GM12878 (cell line): ENCODE measurements at regions of chr12 and their contacts with region 1.

Region 1: DNA sequence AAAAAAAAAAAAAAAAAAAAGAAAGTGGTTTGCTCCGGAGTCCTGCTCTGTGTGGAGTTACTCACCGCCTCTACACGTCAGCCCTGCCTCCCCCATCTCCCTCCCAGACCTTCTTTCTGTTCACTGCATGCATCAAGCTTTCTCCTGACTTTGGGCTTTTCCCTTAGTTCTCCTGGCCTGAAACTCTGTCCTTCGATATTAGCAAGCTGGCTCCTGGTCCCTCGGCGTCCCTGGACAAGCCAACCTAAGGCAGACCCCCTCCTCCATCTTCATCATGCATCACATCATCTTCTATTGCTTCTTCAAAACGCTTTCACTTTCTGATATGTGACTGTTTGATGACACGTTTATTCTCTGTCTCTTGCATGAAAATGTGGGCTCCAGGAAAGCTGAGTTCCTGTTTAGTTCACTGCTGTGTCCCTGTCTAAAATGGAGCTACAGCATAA is 40.6 kb downstream of the SLC15A4 start:
- DNase-seq: no peak
- ATAC-seq: peak; percentile 83
- H3K4me3 ChIP-seq: no peak overlapping the region; the same call in 1 of the 2 replicates
- H3K27ac ChIP-seq: peak overlapping the region; percentile 47; the same call in 1 of the 2 replicates
- H3K4me1 ChIP-seq: no peaks in the 10 kb centered on the region; the same call in none of the 2 replicates
- H3K27me3 ChIP-seq: no peaks in the 10 kb centered on the region
- CTCF ChIP-seq: no peak
- EP300 ChIP-seq: no peak
- POLR2A ChIP-seq: no peak
- RAD21 ChIP-seq: no peak

Region 2: DNA sequence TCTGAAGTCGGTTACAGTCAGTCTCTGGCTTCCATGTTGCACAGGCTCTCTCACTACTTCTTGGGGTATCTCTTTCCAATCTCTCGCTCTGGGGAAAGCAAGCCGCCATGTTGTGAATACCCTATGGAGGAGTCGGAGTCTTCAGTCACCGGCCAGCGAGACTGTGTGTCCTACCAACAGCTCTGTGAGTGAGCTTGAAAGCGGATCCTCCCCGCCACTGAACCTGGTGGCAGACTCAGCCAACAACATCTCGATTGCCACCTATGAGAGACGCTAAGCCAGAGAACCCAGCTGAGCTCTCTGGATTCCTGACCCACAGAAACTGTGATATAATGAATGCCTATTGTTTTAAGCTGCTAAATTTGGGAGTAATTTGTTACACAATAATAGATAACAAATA is 10.9 kb before region 1 on chr12:
- CTCF ChIA-PET with region 1: interaction called, 26 read pairs
- POLR2A ChIA-PET with region 1: interaction called, 3 read pairs
- RAD21 ChIA-PET with region 1: interaction called, 8 read pairs
- SMC1A ChIA-PET with region 1: interaction called, 8 read pairs
- in situ Hi-C with region 1: no loop called
- intact Hi-C with region 1: no loop called
- DNase-seq: no peak
- ATAC-seq: no peak
- H3K4me3 ChIP-seq: no peak overlapping the region
- H3K27ac ChIP-seq: no peak overlapping the region
- H3K4me1 ChIP-seq: no peaks in the 10 kb centered on the region
- H3K27me3 ChIP-seq: no peaks in the 10 kb centered on the region; a peak in 2 of 4 replicates
- CTCF ChIP-seq: no peak
- EP300 ChIP-seq: no peak
- POLR2A ChIP-seq: no peak
- RAD21 ChIP-seq: no peak

Region 3: DNA sequence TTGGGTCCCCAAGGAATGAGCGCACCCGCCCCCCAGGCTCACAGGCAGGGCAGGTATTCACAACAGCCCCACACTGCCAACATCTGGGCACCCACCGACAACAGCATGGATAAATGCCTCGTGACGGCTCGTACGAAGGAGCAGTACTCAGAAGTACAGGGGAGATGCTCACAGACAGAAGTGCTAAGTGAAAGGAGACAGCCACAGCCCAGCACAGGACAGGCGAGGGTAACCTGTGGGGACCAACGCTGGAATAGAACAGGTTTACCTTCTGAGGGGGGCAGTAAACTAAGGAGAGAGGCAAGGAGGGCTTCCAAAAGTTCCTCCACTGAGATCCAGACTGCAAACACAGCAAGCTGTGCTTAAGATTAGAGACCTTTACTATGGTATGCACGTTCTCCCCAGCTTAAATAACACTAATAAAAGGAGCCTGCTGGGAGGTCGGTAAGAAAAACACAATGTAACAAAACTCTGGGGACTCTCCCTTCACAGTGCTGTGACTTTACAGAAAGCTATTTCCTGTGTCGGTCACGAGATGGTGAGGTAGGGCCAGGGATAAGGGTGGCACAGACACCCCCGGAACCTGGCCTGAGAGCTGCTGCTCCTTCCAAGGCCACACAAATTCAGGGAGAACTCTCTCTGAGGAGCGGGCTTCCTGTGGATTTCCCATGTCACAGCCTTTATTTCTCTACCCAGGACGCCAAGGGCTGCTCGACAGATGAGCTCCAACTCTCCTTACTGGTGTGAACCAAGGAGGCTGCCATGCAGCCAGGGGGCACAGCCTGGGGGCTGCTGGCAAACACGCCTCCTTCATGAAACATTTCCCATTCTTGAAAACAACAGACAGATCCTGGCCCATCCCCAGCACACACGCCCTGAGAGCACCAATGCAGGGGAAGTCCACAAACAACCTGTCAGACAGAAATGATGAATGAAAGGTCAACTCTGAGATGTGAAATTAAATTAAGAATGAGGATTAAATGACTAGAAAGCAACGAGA is 14.3 kb after region 1 on chr12:
- CTCF ChIA-PET with region 1: interaction called, 105 read pairs
- POLR2A ChIA-PET with region 1: interaction called, 11 read pairs
- RAD21 ChIA-PET with region 1: interaction called, 51 read pairs
- SMC1A ChIA-PET with region 1: interaction called, 67 read pairs
- in situ Hi-C with region 1: no loop called
- intact Hi-C with region 1: no loop called
- DNase-seq: no peak
- ATAC-seq: peak; percentile 82
- H3K4me3 ChIP-seq: peak overlapping the region; percentile 5; the same call in 1 of the 2 replicates
- H3K27ac ChIP-seq: peak overlapping the region; percentile 99
- H3K4me1 ChIP-seq: peaks cover 60% of the 10 kb centered on the region
- H3K27me3 ChIP-seq: no peaks in the 10 kb centered on the region
- CTCF ChIP-seq: no peak; a peak in 1 of 6 replicates
- EP300 ChIP-seq: peak in 1 of 2 experiments; percentile 26; a peak in 1 of 4 replicates
- POLR2A ChIP-seq: peak; percentile 39
- RAD21 ChIP-seq: peak; percentile 29; the same call in 1 of the 2 replicates

Region 4: DNA sequence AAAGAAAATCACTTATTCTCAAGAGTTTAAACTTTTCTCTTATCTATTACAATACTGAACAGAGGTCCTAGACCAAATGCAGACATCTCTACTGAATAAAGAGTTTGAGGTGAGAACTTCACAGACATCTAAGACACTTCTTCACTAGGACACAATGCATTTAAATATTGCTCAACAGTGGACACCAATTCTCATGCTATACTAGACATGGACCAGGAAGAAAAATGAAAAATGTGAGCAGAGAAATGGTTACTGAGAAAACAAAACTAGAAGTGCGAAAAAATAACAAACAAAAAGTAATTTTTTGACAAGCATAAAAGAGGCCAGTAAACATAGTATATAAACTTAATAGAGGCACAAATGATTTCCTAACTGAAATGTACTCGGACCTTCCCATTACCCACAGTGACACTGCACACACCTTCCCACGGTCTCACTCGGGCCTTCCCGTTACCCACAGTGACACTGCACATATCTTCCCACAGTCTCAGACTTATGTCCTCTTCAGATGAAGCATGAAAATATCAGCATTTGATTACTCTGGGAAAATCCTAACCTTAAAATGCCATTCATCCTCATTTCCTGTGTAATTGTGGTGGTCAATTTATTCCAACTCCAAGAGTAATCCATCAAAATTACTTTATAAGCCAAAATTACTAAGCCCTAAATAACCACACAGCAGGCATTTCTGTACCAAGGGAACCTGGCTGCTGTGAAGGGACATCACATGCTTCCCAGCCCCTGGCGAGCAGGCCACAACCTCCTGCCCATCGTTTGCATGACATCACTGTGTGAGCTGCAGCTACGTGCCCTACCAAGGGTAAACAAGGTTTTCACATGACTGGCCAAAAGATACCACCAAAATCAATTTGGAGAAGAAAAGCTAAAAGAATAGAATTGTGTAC is 34.2 kb after region 1 on chr12:
- CTCF ChIA-PET with region 1: interaction called, 31 read pairs
- POLR2A ChIA-PET with region 1: interaction called, 10 read pairs
- RAD21 ChIA-PET with region 1: interaction called, 27 read pairs
- SMC1A ChIA-PET with region 1: interaction called, 17 read pairs
- in situ Hi-C with region 1: no loop called
- intact Hi-C with region 1: loop called (anchors 2 kb)
- DNase-seq: peak; percentile 90
- ATAC-seq: peak; percentile 42
- H3K4me3 ChIP-seq: peak overlapping the region; percentile 98
- H3K27ac ChIP-seq: peak overlapping the region; percentile 94
- H3K4me1 ChIP-seq: peaks cover 70% of the 10 kb centered on the region
- H3K27me3 ChIP-seq: no peaks in the 10 kb centered on the region
- CTCF ChIP-seq: no peak
- EP300 ChIP-seq: peak in 1 of 2 experiments; percentile 10; a peak in 2 of 4 replicates
- POLR2A ChIP-seq: peak; percentile 54
- RAD21 ChIP-seq: no peak

Region 5: DNA sequence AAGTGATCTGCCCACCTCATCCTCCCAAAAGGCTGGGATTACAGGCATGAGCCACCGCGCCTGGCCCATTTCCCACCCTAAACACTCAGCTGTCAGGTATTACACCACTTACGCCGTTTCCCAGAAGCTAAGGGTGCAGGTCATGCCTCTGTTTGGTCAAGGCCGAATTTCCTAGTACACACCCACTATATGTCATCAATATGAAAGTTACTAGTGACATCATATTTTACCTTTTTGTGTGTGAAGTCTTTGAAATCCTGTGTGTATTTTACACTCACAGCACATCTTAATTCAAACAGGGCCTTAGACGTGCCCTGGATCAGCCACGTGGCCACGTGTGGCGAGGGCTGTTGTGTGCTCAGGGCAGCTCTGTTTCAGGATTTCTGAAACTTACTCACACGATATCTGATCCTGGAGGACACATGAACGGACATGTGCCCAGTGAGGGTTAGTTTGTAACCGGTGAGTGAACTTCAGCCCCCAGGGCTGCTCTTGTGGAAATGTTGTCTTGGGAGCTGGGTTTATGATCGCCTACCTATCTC is 121.9 kb after region 1 on chr12:
- CTCF ChIA-PET with region 1: no interaction called
- POLR2A ChIA-PET with region 1: no interaction called
- RAD21 ChIA-PET with region 1: no interaction called
- SMC1A ChIA-PET with region 1: no interaction called
- in situ Hi-C with region 1: no loop called
- intact Hi-C with region 1: no loop called
- DNase-seq: no peak
- ATAC-seq: no peak
- H3K4me3 ChIP-seq: no peak overlapping the region
- H3K27ac ChIP-seq: no peak overlapping the region
- H3K4me1 ChIP-seq: no peaks in the 10 kb centered on the region
- H3K27me3 ChIP-seq: no peaks in the 10 kb centered on the region
- CTCF ChIP-seq: no peak
- EP300 ChIP-seq: no peak
- POLR2A ChIP-seq: no peak
- RAD21 ChIP-seq: no peak

Region 6: GRCh38 chr12:128969480-128970055 is 186.4 kb after region 1 on chr12:
- CTCF ChIA-PET with region 1: interaction called, 6 read pairs
- POLR2A ChIA-PET with region 1: no interaction called
- RAD21 ChIA-PET with region 1: interaction called, 7 read pairs
- SMC1A ChIA-PET with region 1: interaction called, 8 read pairs
- in situ Hi-C with region 1: no loop called
- intact Hi-C with region 1: loop called (anchors 5 kb)
- DNase-seq: peak; percentile 20
- ATAC-seq: peak; percentile 95
- H3K4me3 ChIP-seq: no peak overlapping the region
- H3K27ac ChIP-seq: no peak overlapping the region
- H3K4me1 ChIP-seq: peaks cover 5% of the 10 kb centered on the region; the same call in 1 of the 2 replicates
- H3K27me3 ChIP-seq: no peaks in the 10 kb centered on the region
- CTCF ChIP-seq: peak; percentile 67 to 83 (median 81)
- EP300 ChIP-seq: no peak
- POLR2A ChIP-seq: no peak
- RAD21 ChIP-seq: peak; percentile 73